ENCODE measurements at regions of chr3 and their contacts with region 1.

Region 1: DNA sequence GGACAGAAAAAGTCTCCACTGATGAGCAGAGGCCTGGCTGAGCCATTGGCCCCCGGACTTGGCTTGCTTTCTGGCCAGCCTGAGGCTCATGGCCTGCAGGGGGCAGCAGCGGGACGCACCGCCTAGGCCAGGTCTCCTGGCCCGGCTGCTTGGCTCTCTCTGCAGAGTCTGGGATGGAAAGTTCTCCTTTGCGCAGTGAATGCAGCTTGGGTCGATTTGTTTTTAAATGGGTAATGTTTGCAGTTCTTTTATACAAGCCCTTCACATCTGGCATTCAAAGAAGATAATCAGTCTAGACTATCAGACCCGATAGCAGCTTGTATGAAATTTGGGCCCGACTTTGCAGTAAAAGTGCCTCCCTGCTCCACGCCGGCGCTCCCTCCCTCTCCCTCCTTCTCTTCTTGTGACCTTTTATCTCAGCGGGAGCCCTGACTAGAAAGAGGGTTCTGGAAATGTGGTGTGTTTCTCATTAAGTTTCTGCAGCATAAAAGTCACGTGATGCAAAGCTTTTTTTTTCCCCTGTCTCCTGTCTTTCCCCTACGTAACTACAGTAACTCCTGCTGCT is 59.9 kb downstream of the ZNF621 start:
- DNase-seq: peak; percentile 88
- H3K4me3 ChIP-seq: no peak overlapping the region
- H3K27ac ChIP-seq: no peak overlapping the region
- H3K4me1 ChIP-seq: no peaks in the 10 kb centered on the region
- H3K27me3 ChIP-seq: no peaks in the 10 kb centered on the region
- CTCF ChIP-seq: peak; percentile 87 to 93 (median 91)
- POLR2A ChIP-seq: no peak

Region 2: GRCh38 chr3:40971191-40972168 is 386.8 kb after region 1 on chr3:
- intact Hi-C with region 1: loop called (anchors 10 kb)
- DNase-seq: peak; percentile 30
- H3K4me3 ChIP-seq: no peak overlapping the region
- H3K27ac ChIP-seq: peak overlapping the region in 1 of 2 donors; percentile 39
- H3K4me1 ChIP-seq: no peaks in the 10 kb centered on the region
- H3K27me3 ChIP-seq: no peaks in the 10 kb centered on the region
- CTCF ChIP-seq: no peak
- POLR2A ChIP-seq: no peak

Region 3: GRCh38 chr3:41198950-41199865 is 614.5 kb after region 1 on chr3 and contains the start of gene CTNNB1:
- intact Hi-C with region 1: loop called (anchors 5 kb)
- DNase-seq: peak; percentile 94
- H3K4me3 ChIP-seq: peak within 1 kb of the TSS; percentile 90 to 96
- H3K27ac ChIP-seq: peak within 1 kb of the TSS; percentile 97 to 99
- H3K4me1 ChIP-seq: no peaks in the 10 kb centered on the region
- H3K27me3 ChIP-seq: no peaks in the 10 kb centered on the region
- CTCF ChIP-seq: peak in 3 of 4 experiments; percentile 14 to 49 (median 30)
- POLR2A ChIP-seq: peak; percentile 90
- total RNA-seq, gene CTNNB1: 405 to 467 TPM

Region 4: GRCh38 chr3:41716471-41716870 is 1131.8 kb after region 1 on chr3:
- intact Hi-C with region 1: loop called (anchors 5 kb)
- DNase-seq: no peak
- H3K4me3 ChIP-seq: no peak overlapping the region
- H3K27ac ChIP-seq: no peak overlapping the region
- H3K4me1 ChIP-seq: no peaks in the 10 kb centered on the region
- H3K27me3 ChIP-seq: no peaks in the 10 kb centered on the region
- CTCF ChIP-seq: peak in 3 of 4 experiments; percentile 28 to 50 (median 44)
- POLR2A ChIP-seq: no peak

Region 5: DNA sequence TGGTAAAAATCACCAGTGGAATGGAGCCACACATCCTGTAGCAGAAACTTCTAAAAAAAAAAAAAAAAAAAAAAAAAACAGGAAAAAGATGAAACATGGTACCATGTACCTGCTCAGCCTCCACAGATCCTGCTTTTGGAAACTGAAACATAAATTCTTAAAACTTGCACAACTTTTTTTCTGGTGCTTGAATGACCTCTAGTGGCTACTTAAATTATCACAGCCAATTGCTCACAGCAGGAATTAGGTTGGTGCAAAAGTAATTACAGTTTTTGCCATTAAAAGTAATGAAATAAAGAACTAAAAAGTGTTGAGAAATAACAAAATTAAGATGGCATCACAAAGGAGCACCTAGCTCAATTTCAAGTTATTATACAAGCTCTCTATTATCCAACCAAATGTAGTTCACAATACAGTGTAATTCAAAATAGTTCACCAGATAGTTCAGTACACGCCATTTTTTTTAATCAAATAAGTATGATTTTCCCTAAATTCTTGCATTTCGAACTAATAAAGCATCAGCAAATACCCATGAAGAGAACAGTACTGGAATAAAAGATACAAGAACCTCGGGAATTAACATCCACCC is 1296.6 kb after region 1 on chr3:
- intact Hi-C with region 1: loop called (anchors 2 kb)
- DNase-seq: peak; percentile 30
- H3K4me3 ChIP-seq: no peak overlapping the region
- H3K27ac ChIP-seq: no peak overlapping the region
- H3K4me1 ChIP-seq: no peaks in the 10 kb centered on the region
- H3K27me3 ChIP-seq: no peaks in the 10 kb centered on the region
- CTCF ChIP-seq: peak; percentile 35 to 81 (median 67)
- POLR2A ChIP-seq: no peak

Region 6: DNA sequence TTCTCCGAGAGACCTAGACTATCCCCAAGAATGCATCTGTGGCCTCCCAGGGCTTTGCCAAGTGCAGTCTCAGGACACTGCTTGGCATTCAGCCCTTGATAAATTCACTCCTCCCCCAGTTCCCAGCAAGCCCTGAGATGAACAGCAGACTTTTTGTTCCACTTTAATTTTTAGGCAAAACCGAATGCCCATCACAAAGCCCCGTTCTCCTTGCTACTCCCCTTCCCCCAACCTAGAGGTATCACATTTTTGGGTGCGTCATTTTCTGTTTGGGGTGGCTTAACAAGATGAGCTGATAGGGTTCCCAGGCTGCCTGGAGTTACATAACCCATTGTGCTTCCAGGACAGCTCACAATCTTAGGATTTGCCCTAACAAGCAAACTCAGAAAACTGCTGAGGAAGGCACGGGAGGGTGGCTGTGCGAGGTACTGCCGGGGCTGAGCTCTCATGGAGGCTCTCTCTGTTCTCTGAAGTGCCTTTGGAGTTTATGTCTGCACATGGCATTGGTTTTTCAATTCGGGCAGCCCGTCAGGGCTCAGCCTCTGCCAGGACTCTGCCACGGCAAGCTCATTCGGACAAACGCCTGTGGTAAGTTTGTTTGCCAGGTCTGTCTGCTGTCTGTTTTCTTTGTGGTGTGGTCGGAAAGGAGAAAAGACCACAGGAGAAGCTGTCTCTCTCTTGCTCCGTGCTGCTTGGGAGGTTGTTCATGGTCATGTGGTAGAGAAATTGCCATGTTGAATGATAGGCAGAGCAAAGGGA is 1506.4 kb after region 1 on chr3 and contains the start of gene TRAK1:
- intact Hi-C with region 1: loop called (anchors 10 kb)
- DNase-seq: peak; percentile 53
- H3K4me3 ChIP-seq: peak within 1 kb of the TSS; percentile 1 to 11
- H3K27ac ChIP-seq: peak within 1 kb of the TSS; percentile 31 to 69
- H3K4me1 ChIP-seq: no peaks in the 10 kb centered on the region
- H3K27me3 ChIP-seq: no peaks in the 10 kb centered on the region
- CTCF ChIP-seq: peak in 2 of 4 experiments; percentile 29 to 31
- POLR2A ChIP-seq: no peak
- total RNA-seq, gene TRAK1: 35.6 to 80.3 TPM